Endothelial cell of umbilical vein (primary cell): ENCODE measurements at regions of chr5 and their contacts with region 1.

Region 1: GRCh38 chr5:138752951-138753793 is at the start of gene CTNNA1:
- DNase-seq: peak; percentile 61
- H3K4me3 ChIP-seq: peak within 1 kb of the TSS; percentile 72 to 94 (median 86)
- H3K27ac ChIP-seq: peak within 1 kb of the TSS; percentile 97
- H3K4me1 ChIP-seq: peaks cover 14% of the 10 kb centered on the region
- H3K27me3 ChIP-seq: no peaks in the 10 kb centered on the region
- CTCF ChIP-seq: no peak
- POLR2A ChIP-seq: peak; percentile 89
- total RNA-seq, gene CTNNA1: 394 and 420 TPM in 2 replicates

Region 2: DNA sequence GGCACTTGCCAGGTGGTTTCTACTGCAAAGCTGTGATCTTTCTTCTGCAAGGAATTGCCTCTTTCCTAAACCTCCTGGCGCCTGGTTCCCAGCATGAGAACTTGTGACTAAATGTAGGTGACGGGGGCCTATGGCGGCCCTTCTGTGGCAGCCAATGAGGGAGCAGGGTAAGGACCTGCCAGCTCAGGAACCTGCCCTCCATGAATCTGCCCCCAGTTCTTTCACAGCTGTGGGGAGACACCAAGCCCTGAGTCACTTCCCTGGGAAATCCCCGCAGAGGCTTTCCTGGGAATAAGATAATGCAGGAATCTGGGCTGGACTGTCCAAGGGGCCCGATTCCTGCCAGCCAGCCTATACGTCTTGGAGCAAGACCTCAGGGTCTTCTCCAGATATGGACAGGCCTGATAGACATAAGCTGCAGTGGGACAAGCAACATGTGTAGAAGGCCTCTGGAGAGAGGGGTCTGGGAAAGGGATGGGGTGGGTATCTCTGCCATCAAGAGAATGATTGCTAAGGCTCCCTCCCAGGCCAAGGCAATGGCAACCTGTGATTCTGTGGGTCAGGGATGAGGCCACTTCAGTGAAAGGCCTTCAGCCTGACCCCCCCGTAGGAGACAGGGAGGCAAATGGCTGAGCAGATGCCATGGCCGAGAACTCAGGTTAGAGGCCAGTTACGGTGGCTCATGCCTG is 56.5 kb before region 1 on chr5:
- CTCF ChIA-PET with region 1: no interaction called
- POLR2A ChIA-PET with region 1: no interaction called
- dilution Hi-C with region 1: no loop called
- intact Hi-C with region 1: loop called (anchors 2 kb)
- DNase-seq: peak; percentile 77
- H3K4me3 ChIP-seq: no peak overlapping the region
- H3K27ac ChIP-seq: no peak overlapping the region
- H3K4me1 ChIP-seq: peaks cover 6% of the 10 kb centered on the region
- H3K27me3 ChIP-seq: peaks cover 0 to 10% of the 10 kb centered on the region in 2 experiments
- CTCF ChIP-seq: no peak
- POLR2A ChIP-seq: no peak

Region 3: DNA sequence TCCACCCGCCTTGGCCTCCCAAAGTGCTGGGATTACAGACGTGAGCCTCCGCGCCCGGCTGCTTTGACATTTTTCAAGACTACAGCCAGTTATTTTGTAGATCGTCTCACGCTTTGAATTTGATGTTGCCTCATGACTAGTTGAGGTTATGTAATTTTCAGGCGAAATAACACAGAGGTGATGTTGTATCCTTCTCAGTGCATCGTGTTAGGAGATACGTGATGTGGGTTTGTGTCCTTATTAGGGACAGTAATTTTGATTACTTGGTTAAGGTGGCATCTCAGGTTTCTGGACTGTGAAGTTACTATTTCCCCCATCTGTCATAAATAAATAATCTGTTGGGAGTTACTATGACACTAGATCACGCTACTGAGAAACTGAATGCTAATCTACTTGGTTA is 25.1 kb after region 1 on chr5:
- CTCF ChIA-PET with region 1: no interaction called
- POLR2A ChIA-PET with region 1: no interaction called
- dilution Hi-C with region 1: no loop called
- intact Hi-C with region 1: no loop called
- DNase-seq: no peak
- H3K4me3 ChIP-seq: no peak overlapping the region
- H3K27ac ChIP-seq: no peak overlapping the region
- H3K4me1 ChIP-seq: no peaks in the 10 kb centered on the region
- H3K27me3 ChIP-seq: no peaks in the 10 kb centered on the region
- CTCF ChIP-seq: no peak
- POLR2A ChIP-seq: no peak